ENCODE measurements at regions of chr6 and their contacts with region 1.

Region 1: GRCh38 chr6:35139908-35140655 is 1.1 kb downstream of the TCP11 start:
- DNase-seq: peak; percentile 70
- ATAC-seq: peak; percentile 70

Region 2: GRCh38 chr6:34982424-34982852 is 157.6 kb before region 1 on chr6:
- intact Hi-C with region 1: loop called (anchors 5 kb)
- DNase-seq: no peak
- ATAC-seq: peak; percentile 45

Region 3: GRCh38 chr6:35181933-35182612 is 42.0 kb after region 1 on chr6:
- intact Hi-C with region 1: no loop called
- DNase-seq: peak; percentile 76
- ATAC-seq: peak; percentile 73